Esophagus muscularis mucosa (tissue), 4 donors: ENCODE measurements at regions of chr5 and their contacts with region 1.

Region 1: GRCh38 chr5:55691265-55692105 is 20.6 kb downstream of the SLC38A9 start:
- DNase-seq: no peak
- H3K4me3 ChIP-seq: peak overlapping the region in 3 of 4 donors; percentile 4 to 25 (median 18)
- H3K27ac ChIP-seq: peak overlapping the region; percentile 24 to 51 (median 42)
- H3K4me1 ChIP-seq: peaks cover 15 to 27% (median 22%) of the 10 kb centered on the region in 4 donors
- H3K27me3 ChIP-seq: no peaks in the 10 kb centered on the region
- CTCF ChIP-seq: peak; percentile 71 to 78 (median 72)
- EP300 ChIP-seq: no peak
- POLR2A ChIP-seq: no peak

Region 2: GRCh38 chr5:54590824-54591223 is 1100.7 kb before region 1 on chr5:
- intact Hi-C with region 1: no loop called
- DNase-seq: no peak
- H3K4me3 ChIP-seq: no peak overlapping the region
- H3K27ac ChIP-seq: no peak overlapping the region
- H3K4me1 ChIP-seq: no peaks in the 10 kb centered on the region
- H3K27me3 ChIP-seq: no peaks in the 10 kb centered on the region
- CTCF ChIP-seq: no peak
- EP300 ChIP-seq: no peak
- POLR2A ChIP-seq: no peak

Region 3: DNA sequence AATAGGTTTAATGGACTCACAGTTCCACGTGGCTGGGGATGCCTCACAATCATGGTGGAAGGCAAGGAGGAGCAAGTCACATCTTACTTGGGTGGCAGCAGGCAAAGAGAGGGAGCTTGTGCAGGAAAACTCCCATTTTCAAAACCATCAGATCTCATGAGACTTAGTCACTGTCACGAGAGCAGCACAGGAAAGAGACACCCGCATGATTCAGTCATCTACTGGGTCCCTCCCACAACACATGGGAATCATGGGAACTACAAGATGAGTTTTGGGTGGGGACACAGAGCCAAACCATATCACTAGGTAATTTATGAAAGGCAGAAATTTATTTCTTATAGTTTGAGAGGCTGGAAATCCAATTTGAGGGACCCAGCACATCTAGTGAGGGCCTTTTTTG is 343.7 kb before region 1 on chr5:
- intact Hi-C with region 1: loop called (anchors 5 kb)
- DNase-seq: no peak
- H3K4me3 ChIP-seq: no peak overlapping the region
- H3K27ac ChIP-seq: no peak overlapping the region
- H3K4me1 ChIP-seq: peaks cover 3 to 16% (median 14%) of the 10 kb centered on the region in 4 donors
- H3K27me3 ChIP-seq: no peaks in the 10 kb centered on the region
- CTCF ChIP-seq: no peak
- EP300 ChIP-seq: no peak
- POLR2A ChIP-seq: no peak

Region 4: DNA sequence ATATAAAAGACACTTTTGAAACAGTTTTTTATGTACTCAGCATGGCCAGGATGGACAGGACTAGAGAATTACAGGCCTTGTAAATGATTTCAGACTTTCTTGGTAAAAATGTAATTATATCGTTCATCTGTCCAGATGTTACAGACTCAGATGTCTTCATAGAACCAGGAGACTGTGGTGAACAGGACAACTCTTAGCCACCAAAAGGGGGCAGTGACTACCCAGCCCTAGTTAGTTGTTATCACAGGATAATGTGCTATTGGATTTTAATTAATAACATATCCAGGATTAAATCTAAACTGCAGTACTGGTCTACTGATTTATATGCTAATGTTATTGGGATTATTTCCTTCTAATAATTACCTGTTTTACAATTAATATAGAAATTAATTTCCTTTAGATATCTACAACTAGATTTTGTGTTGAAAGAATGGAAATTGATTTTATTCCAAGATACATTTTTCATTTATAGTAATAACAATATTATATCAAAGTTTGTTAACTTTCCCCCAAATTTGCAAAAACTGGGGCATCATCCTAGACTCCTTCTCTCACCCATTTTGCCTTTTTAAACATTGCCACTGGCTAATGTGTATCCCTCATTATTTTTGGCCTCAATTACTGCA is 284.3 kb before region 1 on chr5:
- intact Hi-C with region 1: loop called (anchors 2 kb)
- DNase-seq: no peak
- H3K4me3 ChIP-seq: no peak overlapping the region
- H3K27ac ChIP-seq: no peak overlapping the region
- H3K4me1 ChIP-seq: peaks cover 0 to 7% (median 3%) of the 10 kb centered on the region in 4 donors
- H3K27me3 ChIP-seq: no peaks in the 10 kb centered on the region
- CTCF ChIP-seq: peak; percentile 64 to 77 (median 69)
- EP300 ChIP-seq: no peak
- POLR2A ChIP-seq: no peak

Region 5: DNA sequence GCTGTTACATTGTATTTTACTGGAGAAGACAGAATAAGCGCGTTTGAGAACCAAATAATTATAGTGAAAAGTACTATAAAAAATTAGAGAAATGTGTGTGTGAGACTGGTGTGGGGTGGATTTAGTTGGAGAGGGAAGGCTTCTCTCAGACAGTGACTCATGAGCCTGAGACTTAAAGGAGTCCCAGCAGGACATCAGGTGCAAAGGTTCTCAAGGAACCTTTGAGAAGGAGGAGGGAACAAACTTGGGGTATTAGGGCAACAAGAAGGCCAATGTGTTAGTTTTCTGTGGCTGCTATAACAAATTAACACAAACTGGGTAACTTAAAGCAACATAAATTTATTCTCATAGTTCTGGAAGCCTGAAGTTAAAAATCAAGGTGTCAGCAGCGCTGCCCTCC is 51.3 kb after region 1 on chr5:
- intact Hi-C with region 1: no loop called
- DNase-seq: no peak
- H3K4me3 ChIP-seq: no peak overlapping the region
- H3K27ac ChIP-seq: no peak overlapping the region
- H3K4me1 ChIP-seq: no peaks in the 10 kb centered on the region
- H3K27me3 ChIP-seq: no peaks in the 10 kb centered on the region
- CTCF ChIP-seq: no peak
- EP300 ChIP-seq: no peak
- POLR2A ChIP-seq: no peak